Mammary epithelial cell (primary cell): ENCODE measurements at regions of chr4 and their contacts with region 1.

Region 1: GRCh38 chr4:6663596-6664393 is 23.3 kb downstream of the MRFAP1 start:
- DNase-seq: no peak
- H3K4me3 ChIP-seq: no peak overlapping the region
- H3K27ac ChIP-seq: no peak overlapping the region
- H3K4me1 ChIP-seq: peaks cover 9% of the 10 kb centered on the region
- H3K27me3 ChIP-seq: no peaks in the 10 kb centered on the region
- CTCF ChIP-seq: no peak

Region 2: GRCh38 chr4:6568689-6569332 is 95.0 kb before region 1 on chr4:
- CTCF ChIA-PET with region 1: no interaction called
- dilution Hi-C with region 1: no loop called
- in situ Hi-C with region 1: no loop called
- intact Hi-C with region 1: loop called (anchors 5 kb)
- DNase-seq: peak; percentile 74
- H3K4me3 ChIP-seq: no peak overlapping the region
- H3K27ac ChIP-seq: no peak overlapping the region
- H3K4me1 ChIP-seq: peaks cover 12% of the 10 kb centered on the region
- H3K27me3 ChIP-seq: no peaks in the 10 kb centered on the region
- CTCF ChIP-seq: no peak

Region 3: GRCh38 chr4:6601661-6602250 is 62.0 kb before region 1 on chr4:
- CTCF ChIA-PET with region 1: no interaction called
- dilution Hi-C with region 1: loop called (anchors 5 kb)
- in situ Hi-C with region 1: no loop called
- intact Hi-C with region 1: no loop called
- DNase-seq: no peak
- H3K4me3 ChIP-seq: no peak overlapping the region
- H3K27ac ChIP-seq: no peak overlapping the region
- H3K4me1 ChIP-seq: no peaks in the 10 kb centered on the region
- H3K27me3 ChIP-seq: no peaks in the 10 kb centered on the region
- CTCF ChIP-seq: no peak

Region 4: DNA sequence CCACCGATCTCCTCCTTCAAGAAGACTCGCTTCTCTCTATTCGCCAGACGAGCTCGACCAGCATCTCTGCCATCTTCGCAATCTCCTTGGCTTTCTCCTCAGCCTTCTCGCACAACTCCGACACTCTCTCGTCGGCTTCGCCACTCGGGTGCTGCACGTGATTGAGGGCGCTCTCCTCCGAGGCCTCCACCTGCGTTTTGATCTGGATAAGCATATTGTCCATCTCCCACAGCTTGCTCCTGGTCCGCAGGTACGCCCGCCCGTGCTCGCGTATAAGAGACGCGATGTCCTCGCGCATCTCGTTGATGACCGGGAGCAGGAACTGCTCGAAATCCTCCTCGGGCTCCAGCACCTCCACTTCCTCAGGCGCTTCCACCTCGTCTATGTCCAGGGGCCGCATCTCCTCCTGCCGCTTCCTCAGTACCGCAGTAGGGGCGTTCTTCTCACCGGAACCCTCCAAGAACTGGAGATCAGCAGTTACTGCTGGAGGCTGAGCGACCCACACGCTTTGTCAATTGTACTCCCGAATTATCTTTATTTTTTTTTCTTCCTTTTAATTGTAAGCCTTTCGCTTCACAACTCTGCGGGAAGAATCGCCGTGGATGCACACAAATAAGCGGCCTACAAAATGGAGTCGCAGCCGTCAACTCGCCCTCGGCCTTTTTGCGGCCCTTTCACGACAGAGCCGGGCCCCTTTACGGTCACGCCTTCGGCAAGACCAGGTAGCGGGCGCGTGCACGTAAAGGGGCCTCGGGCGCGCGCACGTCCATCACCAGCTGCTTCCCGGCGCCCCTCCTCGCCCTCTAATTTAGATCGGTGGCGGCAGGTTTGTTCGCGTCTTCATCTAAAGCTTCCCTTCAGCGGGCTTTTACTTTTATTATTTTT is 45.7 kb after region 1 on chr4 and contains the start of gene MRFAP1L1:
- CTCF ChIA-PET with region 1: no interaction called
- dilution Hi-C with region 1: loop called (anchors 5 kb)
- in situ Hi-C with region 1: no loop called
- intact Hi-C with region 1: no loop called
- DNase-seq: peak; percentile 96
- H3K4me3 ChIP-seq: peak within 1 kb of the TSS; percentile 73 to 96 (median 81)
- H3K27ac ChIP-seq: peak within 1 kb of the TSS; percentile 66
- H3K4me1 ChIP-seq: peaks cover 16% of the 10 kb centered on the region
- H3K27me3 ChIP-seq: no peaks in the 10 kb centered on the region
- CTCF ChIP-seq: peak in 1 of 2 donors; percentile 15
- total RNA-seq, gene MRFAP1L1: 34.0 to 35.9 TPM

Region 5: GRCh38 chr4:6768539-6768905 is 104.7 kb after region 1 on chr4:
- CTCF ChIA-PET with region 1: no interaction called
- dilution Hi-C with region 1: loop called (anchors 5 kb)
- in situ Hi-C with region 1: no loop called
- intact Hi-C with region 1: no loop called
- DNase-seq: no peak
- H3K4me3 ChIP-seq: no peak overlapping the region
- H3K27ac ChIP-seq: no peak overlapping the region
- H3K4me1 ChIP-seq: peaks cover 49% of the 10 kb centered on the region
- H3K27me3 ChIP-seq: peaks cover 3% of the 10 kb centered on the region
- CTCF ChIP-seq: no peak

Region 6: DNA sequence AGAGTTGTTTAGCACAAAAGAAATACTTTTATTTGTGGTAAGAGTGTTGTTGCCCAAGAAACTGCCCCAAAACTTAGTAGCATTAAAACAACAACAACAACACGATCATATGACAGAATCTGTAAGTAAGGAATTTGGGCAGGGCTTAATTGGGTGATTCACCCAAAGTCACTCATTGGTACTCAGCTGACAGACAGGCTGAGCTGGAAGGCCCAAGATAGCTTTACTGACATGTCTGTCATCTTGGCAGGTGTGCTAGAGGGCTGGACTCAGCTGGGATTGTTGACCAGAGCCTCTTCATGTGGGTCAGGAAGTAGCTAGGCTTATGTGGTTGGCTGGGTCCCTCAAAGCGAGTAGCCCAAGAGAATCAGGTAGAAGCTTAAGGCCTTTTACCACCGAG is 171.1 kb after region 1 on chr4:
- CTCF ChIA-PET with region 1: no interaction called
- dilution Hi-C with region 1: loop called (anchors 5 kb)
- in situ Hi-C with region 1: no loop called
- intact Hi-C with region 1: no loop called
- DNase-seq: peak; percentile 64
- H3K4me3 ChIP-seq: no peak overlapping the region
- H3K27ac ChIP-seq: no peak overlapping the region
- H3K4me1 ChIP-seq: peaks cover 6% of the 10 kb centered on the region
- H3K27me3 ChIP-seq: no peaks in the 10 kb centered on the region
- CTCF ChIP-seq: no peak